Activated T-helper 2 cell treated with anti-CD3 and anti-CD28 coated beads, Interferon-gamma antibody, Interleukin-2, Interleukin-4, amounts not matched to agents 10 μg/mL and 5 μg/mL and 100 μg/mL, durations not matched to agents 14 hours and 24 hours and 36 hours (primary cell): ENCODE measurements at regions of chr18 and their contacts with region 1.

Region 1: DNA sequence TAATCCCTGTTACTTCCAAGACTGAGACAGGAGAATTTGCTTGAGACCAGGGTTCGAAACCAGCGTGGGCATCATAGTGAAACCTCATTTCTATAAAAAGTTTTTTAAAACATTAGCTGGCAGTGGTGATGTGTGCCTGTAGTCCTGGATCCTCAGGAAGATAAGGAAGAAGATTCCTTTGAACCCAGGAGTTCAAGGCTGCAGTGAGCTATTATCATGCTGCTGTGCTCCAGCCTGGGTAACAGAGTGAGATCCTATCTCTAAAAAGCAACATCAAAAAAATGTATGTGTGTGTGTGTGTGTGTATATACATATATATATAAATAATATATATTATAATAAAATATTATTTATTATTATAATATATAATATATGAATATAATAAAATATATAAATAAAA is 1417.6 kb upstream of the CDH2 start:
- DNase-seq: no peak
- H3K4me3 Mint-ChIP-seq: no peak overlapping the region
- H3K27ac Mint-ChIP-seq: no peak overlapping the region
- H3K4me1 Mint-ChIP-seq: no peaks in the 10 kb centered on the region
- H3K27me3 Mint-ChIP-seq: no peaks in the 10 kb centered on the region

Region 2: DNA sequence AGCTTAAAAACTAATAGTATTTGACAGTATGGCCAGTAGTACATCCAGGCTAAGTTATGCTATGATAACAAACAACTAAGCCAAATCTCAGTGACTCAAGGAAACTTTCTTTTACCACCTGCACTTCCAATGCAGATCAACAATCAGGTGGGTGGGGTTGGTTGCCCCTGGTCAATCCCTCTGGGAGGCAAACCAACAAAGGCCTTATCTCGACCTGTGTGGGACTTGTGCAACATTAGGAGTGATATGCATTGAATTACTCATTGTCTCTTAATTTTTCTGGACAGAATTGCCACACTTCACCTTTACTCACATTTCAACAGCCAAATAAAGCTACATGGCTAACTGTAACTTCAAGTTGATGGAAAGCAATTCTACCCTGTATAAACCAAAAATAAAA is 368.3 kb before region 1 on chr18:
- intact Hi-C with region 1: no loop called
- DNase-seq: no peak
- H3K4me3 Mint-ChIP-seq: no peak overlapping the region
- H3K27ac Mint-ChIP-seq: no peak overlapping the region
- H3K4me1 Mint-ChIP-seq: no peaks in the 10 kb centered on the region
- H3K27me3 Mint-ChIP-seq: no peaks in the 10 kb centered on the region

Region 3: GRCh38 chr18:30491815-30492551 is 897.5 kb after region 1 on chr18:
- intact Hi-C with region 1: loop called (anchors 5 kb)
- DNase-seq: no peak
- H3K4me3 Mint-ChIP-seq: no peak overlapping the region
- H3K27ac Mint-ChIP-seq: no peak overlapping the region
- H3K4me1 Mint-ChIP-seq: no peaks in the 10 kb centered on the region
- H3K27me3 Mint-ChIP-seq: no peaks in the 10 kb centered on the region